Tibial artery (tissue), 4 donors: ENCODE measurements at regions of chr17 and their contacts with region 1.

Region 1: GRCh38 chr17:36697903-36698530 is 96.6 kb downstream of the MRM1 start:
- DNase-seq: no peak
- H3K4me3 ChIP-seq: no peak overlapping the region
- H3K27ac ChIP-seq: no peak overlapping the region
- H3K4me1 ChIP-seq: no peaks in the 10 kb centered on the region
- H3K27me3 ChIP-seq: peaks cover 0 to 53% of the 10 kb centered on the region in 2 donors
- CTCF ChIP-seq: no peak

Region 2: GRCh38 chr17:36742267-36743000 is 44.4 kb after region 1 on chr17:
- intact Hi-C with region 1: loop called (anchors 10 kb)
- DNase-seq: no peak
- H3K4me3 ChIP-seq: no peak overlapping the region
- H3K27ac ChIP-seq: no peak overlapping the region
- H3K4me1 ChIP-seq: no peaks in the 10 kb centered on the region
- H3K27me3 ChIP-seq: peaks cover 0 to 11% of the 10 kb centered on the region in 2 donors
- CTCF ChIP-seq: no peak

Region 3: DNA sequence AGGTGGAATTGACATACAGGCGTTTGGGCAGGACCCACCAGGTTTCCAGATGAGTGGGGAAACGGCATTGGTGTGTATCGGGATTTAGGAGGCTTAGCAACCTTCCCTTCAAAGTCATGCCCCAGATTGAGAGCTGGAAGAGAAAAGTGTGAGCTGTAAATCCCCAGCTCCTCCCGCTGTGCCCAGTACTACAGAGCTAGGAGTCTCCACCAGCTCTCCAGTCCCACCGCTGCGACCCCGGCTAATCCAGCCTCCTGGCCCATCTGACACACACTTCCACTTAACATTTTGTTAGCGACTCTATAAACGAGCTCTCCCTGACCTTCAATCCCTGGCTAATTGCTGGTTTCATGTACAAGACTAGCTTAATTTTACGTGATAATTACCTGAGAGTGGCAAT is 209.4 kb after region 1 on chr17:
- intact Hi-C with region 1: no loop called
- DNase-seq: no peak
- H3K4me3 ChIP-seq: no peak overlapping the region
- H3K27ac ChIP-seq: no peak overlapping the region
- H3K4me1 ChIP-seq: no peaks in the 10 kb centered on the region
- H3K27me3 ChIP-seq: peaks cover 0 to 47% of the 10 kb centered on the region in 2 donors
- CTCF ChIP-seq: no peak